Heart right ventricle (tissue), 16 donors: ENCODE measurements at regions of chr7 and their contacts with region 1.

Region 1: DNA sequence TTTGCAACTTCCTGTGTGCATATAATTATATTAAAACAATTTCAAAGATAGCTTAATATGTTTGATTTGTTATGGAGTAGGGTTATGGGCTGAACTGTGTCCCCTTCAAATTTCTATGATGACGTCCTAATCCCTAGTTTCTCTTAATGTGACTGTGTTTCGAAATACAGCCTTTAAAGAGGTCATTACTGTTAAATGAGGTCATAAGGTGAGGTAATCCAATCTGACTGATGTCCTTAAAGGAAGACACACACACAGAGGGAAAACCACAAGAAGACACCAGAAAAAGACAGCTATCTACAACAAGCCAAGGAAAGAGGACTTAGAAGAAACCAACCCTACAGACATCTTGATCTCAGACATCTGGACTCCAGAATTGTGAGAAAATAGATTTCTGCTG is 407.4 kb downstream of the MAGI2 start:
- DNase-seq: no peak
- ATAC-seq: no peak
- H3K4me3 ChIP-seq: no peak overlapping the region
- H3K27ac ChIP-seq: no peak overlapping the region
- H3K4me1 ChIP-seq: no peaks in the 10 kb centered on the region
- H3K27me3 ChIP-seq: no peaks in the 10 kb centered on the region
- CTCF ChIP-seq: no peak

Region 2: GRCh38 chr7:78983483-78983882 is 62.6 kb before region 1 on chr7:
- intact Hi-C with region 1: no loop called
- DNase-seq: no peak
- ATAC-seq: no peak
- H3K4me3 ChIP-seq: no peak overlapping the region
- H3K27ac ChIP-seq: no peak overlapping the region
- H3K4me1 ChIP-seq: no peaks in the 10 kb centered on the region
- H3K27me3 ChIP-seq: no peaks in the 10 kb centered on the region
- CTCF ChIP-seq: no peak

Region 3: GRCh38 chr7:79096361-79096805 is 50.3 kb after region 1 on chr7:
- intact Hi-C with region 1: loop called in 1 of 10 experiments (anchors 10 kb)
- DNase-seq: no peak
- ATAC-seq: no peak
- H3K4me3 ChIP-seq: no peak overlapping the region
- H3K27ac ChIP-seq: no peak overlapping the region
- H3K4me1 ChIP-seq: no peaks in the 10 kb centered on the region
- H3K27me3 ChIP-seq: no peaks in the 10 kb centered on the region
- CTCF ChIP-seq: no peak

Region 4: DNA sequence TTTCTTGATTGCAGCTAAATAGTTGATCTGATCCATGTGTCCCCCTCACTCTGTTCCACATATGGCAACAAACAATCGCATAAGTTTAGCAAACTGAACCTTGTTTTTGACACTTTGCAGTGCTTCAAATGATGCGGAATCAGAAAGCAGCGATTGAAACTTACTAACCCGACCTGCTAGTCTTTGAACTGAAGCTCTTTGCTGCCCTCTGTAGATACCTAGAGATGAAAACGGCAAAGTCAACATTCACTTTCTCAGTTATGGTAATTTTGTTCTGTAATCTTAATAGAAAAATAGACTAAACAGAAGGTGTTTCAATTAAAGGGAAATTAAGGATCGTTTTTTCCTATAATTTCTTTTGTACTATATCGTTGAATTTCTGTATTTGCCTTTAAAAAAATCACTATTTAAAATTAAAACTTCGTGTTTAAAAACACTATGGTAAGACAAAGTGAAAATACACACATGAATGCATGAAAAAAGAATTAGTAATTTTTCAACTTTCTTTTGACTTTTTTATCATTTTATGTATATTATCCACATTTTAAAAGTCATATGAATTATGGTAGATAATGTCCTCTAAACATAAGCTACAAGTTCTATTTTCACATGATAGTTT is 130.9 kb after region 1 on chr7:
- intact Hi-C with region 1: no loop called
- DNase-seq: peak in 1 of 2 donors; percentile 7
- ATAC-seq: peak in 4 of 8 donors; percentile 54 to 61 (median 57)
- H3K4me3 ChIP-seq: no peak overlapping the region
- H3K27ac ChIP-seq: no peak overlapping the region
- H3K4me1 ChIP-seq: peaks cover 0 to 3% (median 0%) of the 10 kb centered on the region in 9 donors
- H3K27me3 ChIP-seq: no peaks in the 10 kb centered on the region
- CTCF ChIP-seq: peak; percentile 15 to 75 (median 54)